Natural killer cell (primary cell): ENCODE measurements at regions of chr6 and their contacts with region 1.

Region 1: DNA sequence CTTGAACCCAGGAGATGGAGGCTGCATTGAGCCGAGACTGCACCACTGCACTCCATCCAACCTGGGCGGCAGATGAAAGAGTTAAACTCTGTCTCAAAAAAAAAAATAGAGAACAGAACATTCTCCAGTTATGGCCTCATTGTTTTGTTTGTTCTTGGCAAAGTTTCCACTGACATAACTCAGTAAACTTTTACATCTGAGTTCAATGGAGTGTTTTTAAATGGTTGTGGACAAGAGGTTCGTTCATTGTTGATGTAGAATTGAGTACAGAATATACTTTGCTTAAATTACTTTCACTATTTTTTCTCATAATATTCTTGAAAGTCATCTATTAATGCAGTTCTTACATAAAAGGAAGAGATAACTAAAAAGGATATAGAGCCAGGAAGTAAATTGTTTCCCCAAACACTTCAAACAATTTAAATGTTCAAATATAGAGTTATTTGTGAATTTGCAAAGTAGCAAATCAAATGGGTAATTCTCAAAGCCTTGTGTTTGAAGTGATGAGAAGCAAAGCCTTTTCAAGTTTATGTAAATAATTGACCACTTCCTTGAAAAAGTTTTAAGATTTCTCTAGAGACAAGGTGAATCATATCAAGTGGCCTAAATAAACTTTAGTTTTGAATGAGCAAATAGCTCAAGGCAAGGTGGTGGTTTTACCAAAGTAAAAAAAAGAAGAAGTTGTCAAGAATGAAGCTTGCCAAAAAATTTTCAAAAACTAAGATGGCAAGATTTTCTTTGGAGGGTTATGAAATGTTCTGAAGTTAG is 42.4 kb upstream of the IFNGR1 start:
- DNase-seq: peak in 1 of 2 donors; percentile 41
- ATAC-seq: peak in 2 of 3 donors; percentile 49 to 51
- H3K4me3 ChIP-seq: no peak overlapping the region
- H3K4me3 Mint-ChIP-seq: peak overlapping the region; percentile 74
- H3K27ac ChIP-seq: peak overlapping the region; percentile 59
- H3K27ac Mint-ChIP-seq: peak overlapping the region; percentile 77 to 92
- H3K4me1 ChIP-seq: peaks cover 33% of the 10 kb centered on the region
- H3K4me1 Mint-ChIP-seq: peaks cover 66 to 68% of the 10 kb centered on the region in 2 donors
- H3K27me3 ChIP-seq: no peaks in the 10 kb centered on the region
- H3K27me3 Mint-ChIP-seq: no peaks in the 10 kb centered on the region
- CTCF ChIP-seq: no peak

Region 2: GRCh38 chr6:137033828-137034227 is 227.7 kb before region 1 on chr6:
- intact Hi-C with region 1: loop called (anchors 5 kb)
- DNase-seq: peak; percentile 63 to 81
- ATAC-seq: peak; percentile 92 to 99 (median 92)
- H3K4me3 ChIP-seq: no peak overlapping the region
- H3K4me3 Mint-ChIP-seq: peak overlapping the region; percentile 69
- H3K27ac ChIP-seq: no peak overlapping the region
- H3K27ac Mint-ChIP-seq: peak overlapping the region; percentile 73 to 77
- H3K4me1 ChIP-seq: peaks cover 17% of the 10 kb centered on the region
- H3K4me1 Mint-ChIP-seq: peaks cover 14 to 22% of the 10 kb centered on the region in 2 donors
- H3K27me3 ChIP-seq: peaks cover 67% of the 10 kb centered on the region
- H3K27me3 Mint-ChIP-seq: peaks cover 70 to 83% of the 10 kb centered on the region in 2 donors
- CTCF ChIP-seq: no peak

Region 3: DNA sequence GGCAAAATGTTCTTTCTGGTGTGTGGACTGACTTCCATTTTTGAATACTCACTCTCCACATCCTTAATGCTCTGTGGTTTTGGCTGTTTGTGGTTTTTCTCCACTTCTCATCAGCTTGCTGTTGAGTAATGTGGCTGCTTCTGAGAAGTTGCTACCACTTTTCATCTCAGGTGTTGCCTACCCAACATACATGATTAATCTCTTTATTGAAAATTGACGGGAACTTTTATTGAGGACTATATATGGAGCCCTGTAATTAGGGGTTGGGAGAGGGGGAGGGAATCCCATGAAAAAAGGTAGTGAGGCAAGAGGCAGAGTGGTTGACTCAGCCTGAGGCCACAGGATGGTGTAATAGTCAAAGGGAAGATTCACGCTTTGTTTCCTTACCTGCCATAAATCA is 105.7 kb before region 1 on chr6:
- intact Hi-C with region 1: loop called (anchors 5 kb)
- DNase-seq: peak in 1 of 2 donors; percentile 74
- ATAC-seq: peak; percentile 85 to 98 (median 86)
- H3K4me3 ChIP-seq: no peak overlapping the region
- H3K4me3 Mint-ChIP-seq: peak overlapping the region; percentile 72
- H3K27ac ChIP-seq: no peak overlapping the region
- H3K27ac Mint-ChIP-seq: peak overlapping the region; percentile 45 to 89
- H3K4me1 ChIP-seq: peaks cover 19% of the 10 kb centered on the region
- H3K4me1 Mint-ChIP-seq: peaks cover 36 to 43% of the 10 kb centered on the region in 2 donors
- H3K27me3 ChIP-seq: peaks cover 3% of the 10 kb centered on the region
- H3K27me3 Mint-ChIP-seq: peaks cover 14 to 23% of the 10 kb centered on the region in 2 donors
- CTCF ChIP-seq: no peak

Region 4: DNA sequence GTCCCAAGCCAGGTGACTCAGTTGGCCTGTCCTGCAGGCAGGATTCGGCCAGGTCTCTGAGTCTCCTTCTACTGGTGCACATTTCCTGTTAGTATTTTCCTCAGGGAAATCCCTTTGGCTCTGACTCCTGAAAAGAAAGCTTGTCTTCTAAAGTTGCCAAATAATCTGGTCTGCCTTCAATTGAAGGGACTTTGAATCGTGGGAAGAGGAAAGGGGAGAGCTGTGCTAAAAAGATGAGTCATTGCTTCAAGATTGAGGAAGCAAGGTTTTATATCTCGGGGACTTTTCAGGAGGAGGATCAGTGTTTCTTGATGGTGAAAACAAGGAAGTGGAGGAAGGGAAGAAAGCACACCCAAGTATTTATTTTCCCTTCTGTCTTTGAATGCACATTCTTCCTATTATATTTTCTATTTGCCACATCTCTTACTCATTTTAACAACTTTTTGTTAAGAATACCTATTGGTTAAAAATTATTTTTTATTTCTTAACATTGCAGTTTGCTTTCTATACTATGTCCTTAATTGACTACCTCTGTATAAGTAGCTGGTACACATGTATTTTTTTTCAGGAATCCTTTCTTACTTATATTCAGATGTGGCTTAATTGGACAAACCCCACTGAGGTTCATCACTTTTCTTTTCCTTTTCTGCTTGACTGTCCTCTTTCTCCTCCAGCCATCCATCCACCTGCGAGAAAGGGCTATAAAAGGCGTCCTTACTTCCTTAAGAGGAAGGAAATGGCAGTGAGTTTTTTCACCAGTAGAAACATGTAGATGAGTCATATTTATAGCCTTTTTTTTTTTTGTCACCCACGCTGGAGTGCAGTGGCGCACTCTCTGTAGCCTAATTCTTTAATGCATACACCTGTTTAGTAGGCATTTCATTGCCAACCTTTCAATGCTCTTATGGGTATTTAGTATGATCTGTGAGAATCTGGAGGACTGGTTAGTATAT is 27.4 kb before region 1 on chr6:
- intact Hi-C with region 1: loop called (anchors 1 kb)
- DNase-seq: peak in 1 of 2 donors; percentile 72
- ATAC-seq: peak; percentile 67 to 77 (median 75)
- H3K4me3 ChIP-seq: no peak overlapping the region
- H3K4me3 Mint-ChIP-seq: peak overlapping the region; percentile 77
- H3K27ac ChIP-seq: peak overlapping the region; percentile 50
- H3K27ac Mint-ChIP-seq: peak overlapping the region; percentile 79 to 88
- H3K4me1 ChIP-seq: peaks cover 51% of the 10 kb centered on the region
- H3K4me1 Mint-ChIP-seq: peaks cover 64 to 72% of the 10 kb centered on the region in 2 donors
- H3K27me3 ChIP-seq: no peaks in the 10 kb centered on the region
- H3K27me3 Mint-ChIP-seq: no peaks in the 10 kb centered on the region
- CTCF ChIP-seq: no peak

Region 5: GRCh38 chr6:137866914-137867684 is 605.5 kb after region 1 on chr6 and contains the start of gene TNFAIP3:
- intact Hi-C with region 1: loop called (anchors 2 kb)
- DNase-seq: peak; percentile 94 to 98
- ATAC-seq: peak; percentile 76 to 93 (median 80)
- H3K4me3 ChIP-seq: peak within 1 kb of the TSS; percentile 99
- H3K4me3 Mint-ChIP-seq: peak within 1 kb of the TSS; percentile 98
- H3K27ac ChIP-seq: peak within 1 kb of the TSS; percentile 97
- H3K27ac Mint-ChIP-seq: peak within 1 kb of the TSS; percentile 96 to 98
- H3K4me1 ChIP-seq: peaks cover 41% of the 10 kb centered on the region
- H3K4me1 Mint-ChIP-seq: peaks cover 53 to 61% of the 10 kb centered on the region in 2 donors
- H3K27me3 ChIP-seq: no peaks in the 10 kb centered on the region
- H3K27me3 Mint-ChIP-seq: no peaks in the 10 kb centered on the region
- CTCF ChIP-seq: peak; percentile 78
- total RNA-seq, gene TNFAIP3: 1,163 to 1,298 (median 1,241) TPM